ENCODE measurements at regions of chr3 and their contacts with region 1.

Region 1: GRCh38 chr3:169149349-169149890 is 514.1 kb downstream of the MECOM start:
- DNase-seq: peak; percentile 84 to 89 (median 85)
- ATAC-seq: peak; percentile 79 to 88 (median 84)
- H3K4me3 ChIP-seq: peak overlapping the region in 11 of 12 donors; percentile 1 to 72 (median 43)
- H3K27ac ChIP-seq: peak overlapping the region; percentile 47 to 90 (median 70)
- H3K4me1 ChIP-seq: peaks cover 0 to 44% (median 6%) of the 10 kb centered on the region in 12 donors
- H3K27me3 ChIP-seq: peaks cover 0 to 51% (median 31%) of the 10 kb centered on the region in 9 donors
- CTCF ChIP-seq: peak; percentile 64 to 93 (median 87)
- POLR2A ChIP-seq: no peak

Region 2: DNA sequence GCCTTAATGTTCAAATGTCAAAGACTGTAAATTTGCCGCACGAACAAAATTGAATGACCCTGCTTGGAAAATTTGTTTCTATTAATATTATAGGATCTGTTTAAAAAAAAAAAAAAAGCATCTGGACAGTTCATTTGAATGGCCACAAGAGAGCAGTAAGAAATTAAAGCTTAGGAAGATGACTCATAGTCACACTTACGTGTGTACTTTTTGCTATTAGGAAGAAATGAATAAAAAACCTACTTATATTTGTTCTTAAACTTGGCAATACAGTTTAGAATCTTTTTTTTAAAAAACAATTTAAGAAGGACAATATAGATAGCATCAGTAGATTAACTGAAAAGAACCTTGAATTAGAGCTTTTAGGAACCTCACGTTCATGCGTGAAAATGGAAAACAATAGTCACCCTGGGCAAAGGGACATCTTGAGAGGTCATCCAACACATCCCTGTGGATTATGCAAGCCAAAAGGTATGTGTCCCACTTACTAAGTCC is 107.7 kb before region 1 on chr3:
- intact Hi-C with region 1: loop called in 2 of 10 experiments (anchors 5 kb)
- DNase-seq: no peak
- ATAC-seq: peak in 2 of 4 donors; percentile 64 to 68
- H3K4me3 ChIP-seq: peak overlapping the region in 5 of 12 donors; percentile 13 to 30 (median 15)
- H3K27ac ChIP-seq: peak overlapping the region in 5 of 12 donors; percentile 19 to 54 (median 34)
- H3K4me1 ChIP-seq: peaks cover 0 to 6% (median 0%) of the 10 kb centered on the region in 12 donors
- H3K27me3 ChIP-seq: no peaks in the 10 kb centered on the region
- CTCF ChIP-seq: peak; percentile 40 to 73 (median 57)
- POLR2A ChIP-seq: no peak

Region 3: DNA sequence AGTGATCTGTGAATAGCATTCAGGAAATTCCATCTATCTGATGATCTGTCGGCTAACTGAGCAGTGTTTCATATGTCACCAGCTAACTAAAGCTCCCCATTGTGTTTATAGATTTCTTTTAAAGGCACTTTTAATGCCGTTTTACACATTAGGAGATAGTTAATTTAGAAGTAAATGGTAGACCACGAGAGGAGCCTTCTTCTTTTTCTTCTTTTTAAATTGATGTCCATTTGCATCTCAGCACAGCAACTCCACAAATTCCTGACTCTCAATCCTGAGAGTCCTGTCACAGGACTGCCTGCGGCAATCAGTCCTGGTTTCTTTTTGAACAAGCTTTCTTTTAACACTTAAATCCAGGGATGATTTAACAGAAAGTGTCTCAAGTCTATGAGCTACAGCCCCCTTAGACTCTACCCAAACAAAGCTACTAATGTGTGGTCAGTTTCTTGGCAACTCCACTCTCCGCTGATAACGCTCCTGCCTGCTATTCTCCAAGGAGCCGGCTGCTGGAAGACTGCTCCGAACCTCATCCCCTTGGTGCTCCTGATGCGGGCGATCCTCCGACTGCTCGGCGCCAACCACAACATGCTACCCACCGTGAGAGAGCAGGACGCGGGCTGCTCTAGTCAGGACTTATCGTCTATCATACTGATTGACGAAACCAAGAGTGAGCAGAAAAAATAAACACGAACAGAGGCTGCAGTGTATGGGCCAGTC is 92.7 kb after region 1 on chr3:
- intact Hi-C with region 1: loop called in 1 of 10 experiments (anchors 10 kb)
- DNase-seq: peak; percentile 30 to 72 (median 49)
- ATAC-seq: peak; percentile 69 to 80 (median 76)
- H3K4me3 ChIP-seq: peak overlapping the region in 11 of 12 donors; percentile 21 to 59 (median 48)
- H3K27ac ChIP-seq: peak overlapping the region; percentile 35 to 81 (median 66)
- H3K4me1 ChIP-seq: peaks cover 0 to 31% (median 7%) of the 10 kb centered on the region in 12 donors
- H3K27me3 ChIP-seq: peaks cover 0 to 11% (median 0%) of the 10 kb centered on the region in 9 donors
- CTCF ChIP-seq: no peak
- POLR2A ChIP-seq: no peak

Region 4: GRCh38 chr3:169390271-169391230 is 241.1 kb after region 1 on chr3:
- intact Hi-C with region 1: loop called in 2 of 10 experiments (anchors 5 to 10 kb)
- DNase-seq: no peak
- ATAC-seq: no peak
- H3K4me3 ChIP-seq: no peak overlapping the region
- H3K27ac ChIP-seq: peak overlapping the region in 4 of 12 donors; percentile 21 to 59 (median 32)
- H3K4me1 ChIP-seq: peaks cover 0 to 39% (median 16%) of the 10 kb centered on the region in 12 donors
- H3K27me3 ChIP-seq: no peaks in the 10 kb centered on the region
- CTCF ChIP-seq: peak in 4 of 12 donors; percentile 9 to 30 (median 26)
- POLR2A ChIP-seq: no peak

Region 5: DNA sequence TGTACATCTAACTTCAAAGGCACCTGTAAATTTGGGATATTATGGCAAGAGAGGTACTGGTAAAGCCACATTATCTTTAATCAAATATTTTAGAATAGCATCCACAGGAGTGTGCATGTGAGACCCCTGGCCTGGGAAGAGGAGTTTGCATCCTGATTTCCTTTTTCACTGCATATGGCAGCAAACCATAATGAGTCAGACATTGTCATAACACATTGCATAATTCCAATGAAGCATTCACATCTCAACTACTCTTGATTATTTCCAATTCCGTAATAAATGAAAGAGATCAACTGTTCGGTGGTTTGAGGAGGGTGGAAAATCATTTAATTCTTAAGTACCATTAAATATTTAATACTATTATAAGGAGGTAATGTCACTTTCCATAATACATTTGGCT is 299.1 kb after region 1 on chr3:
- intact Hi-C with region 1: no loop called
- DNase-seq: no peak
- ATAC-seq: no peak
- H3K4me3 ChIP-seq: no peak overlapping the region
- H3K27ac ChIP-seq: no peak overlapping the region
- H3K4me1 ChIP-seq: peaks cover 0 to 9% (median 5%) of the 10 kb centered on the region in 12 donors
- H3K27me3 ChIP-seq: no peaks in the 10 kb centered on the region
- CTCF ChIP-seq: no peak
- POLR2A ChIP-seq: no peak

Region 6: DNA sequence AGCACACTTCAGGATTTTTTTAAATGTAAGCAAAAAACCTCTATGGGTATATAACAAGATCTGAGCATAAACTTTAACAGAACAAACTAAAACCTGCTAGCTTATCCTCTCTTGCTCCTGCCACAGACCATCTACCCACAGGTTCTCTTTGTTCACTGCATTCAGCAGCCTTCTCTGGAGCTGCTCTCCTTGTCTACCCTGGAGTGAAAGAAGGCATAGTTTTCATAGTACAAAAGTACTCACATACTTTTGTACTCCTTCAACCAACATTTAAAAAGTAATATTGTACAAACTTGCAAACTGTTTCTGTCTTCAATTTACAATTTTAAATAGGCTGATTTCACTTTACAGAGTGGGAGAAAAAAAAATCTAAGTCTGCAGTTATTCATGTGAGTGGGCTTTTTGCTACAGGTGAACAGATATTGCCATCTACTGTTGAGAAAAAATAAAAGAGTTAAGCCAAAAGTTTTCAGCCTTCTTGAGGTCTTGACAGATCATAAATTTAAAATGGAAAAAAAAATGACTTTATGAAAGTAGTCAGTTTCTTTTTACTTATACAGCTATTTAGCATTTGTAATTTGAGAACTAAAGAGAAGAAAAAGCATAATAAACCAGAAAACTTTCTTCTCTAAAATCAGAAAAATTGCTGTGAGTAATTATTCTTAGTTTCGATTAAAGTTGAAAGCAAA is 595.1 kb after region 1 on chr3:
- intact Hi-C with region 1: loop called in 3 of 10 experiments (anchors 5 to 10 kb)
- DNase-seq: no peak
- ATAC-seq: no peak
- H3K4me3 ChIP-seq: no peak overlapping the region
- H3K27ac ChIP-seq: no peak overlapping the region
- H3K4me1 ChIP-seq: peaks cover 0 to 4% (median 0%) of the 10 kb centered on the region in 12 donors
- H3K27me3 ChIP-seq: peaks cover 0 to 12% (median 3%) of the 10 kb centered on the region in 9 donors
- CTCF ChIP-seq: peak; percentile 25 to 64 (median 49)
- POLR2A ChIP-seq: no peak

Measured in heart left ventricle (tissue), 16 donors.